ENCODE measurements at regions of chr6 and their contacts with region 1.

Region 1: GRCh38 chr6:83067448-83068413 is at the start of gene DOP1A:
- DNase-seq: peak; percentile 92
- ATAC-seq: peak; percentile 80
- H3K4me3 Mint-ChIP-seq: peak within 1 kb of the TSS; percentile 92
- H3K27ac Mint-ChIP-seq: peak within 1 kb of the TSS; percentile 92
- H3K4me1 Mint-ChIP-seq: peaks cover 56% of the 10 kb centered on the region
- H3K27me3 Mint-ChIP-seq: no peaks in the 10 kb centered on the region
- CTCF ChIP-seq: peak; percentile 85
- total RNA-seq, gene DOP1A: 24.2 and 30.8 TPM in 2 replicates

Region 2: DNA sequence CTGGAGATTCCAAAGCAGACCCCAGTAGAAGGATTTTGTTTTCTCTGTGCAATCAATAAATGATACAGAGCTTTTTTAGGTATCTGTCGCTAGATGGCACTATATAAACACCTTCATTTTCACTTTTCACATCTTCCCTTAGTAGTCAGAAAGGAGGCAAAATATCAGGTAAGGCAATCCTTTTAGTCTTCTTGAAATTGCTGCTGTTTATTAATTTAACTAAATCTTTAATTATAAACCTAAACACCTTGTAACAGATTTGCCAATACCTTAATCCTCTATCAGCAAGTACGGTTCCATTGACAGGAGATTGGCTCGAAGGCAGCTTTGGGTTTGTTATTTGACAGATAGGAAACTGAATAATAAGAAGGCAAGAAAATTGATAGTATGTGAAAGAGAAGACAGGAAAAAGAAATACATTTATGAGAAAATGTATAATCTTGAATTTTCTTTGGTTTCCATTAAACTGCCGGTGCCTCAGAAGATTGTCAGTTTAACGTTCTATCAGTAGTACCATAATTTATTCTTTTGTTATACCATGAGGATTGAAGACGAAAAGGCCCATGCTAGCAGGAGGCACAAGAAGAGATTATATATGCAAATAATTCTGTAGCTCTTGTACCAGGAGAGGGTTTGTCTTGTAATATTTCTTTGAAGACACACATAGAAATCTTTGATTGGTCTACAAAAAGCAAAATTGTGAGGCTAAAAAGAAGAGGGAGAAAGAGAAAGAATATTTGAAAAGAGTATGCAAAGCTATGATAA is 796.7 kb before region 1 on chr6:
- CTCF ChIA-PET with region 1: interaction called, 30 read pairs
- POLR2A ChIA-PET with region 1: no interaction called
- intact Hi-C with region 1: no loop called
- DNase-seq: no peak
- ATAC-seq: no peak
- H3K4me3 Mint-ChIP-seq: no peak overlapping the region
- H3K27ac Mint-ChIP-seq: no peak overlapping the region
- H3K4me1 Mint-ChIP-seq: no peaks in the 10 kb centered on the region
- H3K27me3 Mint-ChIP-seq: no peaks in the 10 kb centered on the region
- CTCF ChIP-seq: no peak

Region 3: DNA sequence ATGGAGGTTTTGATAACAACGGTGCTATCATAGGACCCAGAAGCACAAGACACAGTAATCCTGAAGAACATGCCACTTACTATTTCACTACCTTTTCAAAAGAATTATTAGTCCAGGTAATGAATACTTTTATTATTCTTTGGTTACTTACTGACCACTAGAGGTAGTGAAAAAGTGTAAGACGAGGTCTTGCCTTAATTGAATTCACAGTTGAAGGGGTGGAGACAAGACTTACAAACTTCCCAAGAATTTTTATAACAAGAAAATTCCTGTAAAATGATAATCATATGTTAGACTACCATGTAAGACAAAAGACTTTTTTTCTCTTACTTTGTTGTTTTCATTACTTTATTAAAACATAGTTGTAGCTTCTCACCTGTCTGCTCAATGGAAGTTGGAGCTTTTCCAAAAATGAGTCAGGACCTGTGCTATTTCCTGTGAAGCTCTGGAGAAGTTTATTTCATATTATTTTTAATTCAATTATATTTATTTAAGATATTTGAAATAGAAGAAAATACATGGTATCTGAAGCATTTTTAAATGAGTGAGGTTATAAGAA is 52.1 kb after region 1 on chr6:
- CTCF ChIA-PET with region 1: interaction called, 12 read pairs
- POLR2A ChIA-PET with region 1: no interaction called
- intact Hi-C with region 1: loop called (anchors 2 kb)
- DNase-seq: no peak
- ATAC-seq: no peak
- H3K4me3 Mint-ChIP-seq: no peak overlapping the region
- H3K27ac Mint-ChIP-seq: no peak overlapping the region
- H3K4me1 Mint-ChIP-seq: no peaks in the 10 kb centered on the region
- H3K27me3 Mint-ChIP-seq: no peaks in the 10 kb centered on the region
- CTCF ChIP-seq: no peak

Region 4: GRCh38 chr6:83192871-83193746 is 125.4 kb after region 1 on chr6 and contains the starts of genes PGM3 and RWDD2A:
- CTCF ChIA-PET with region 1: interaction called, 9 read pairs
- POLR2A ChIA-PET with region 1: interaction called, 10 read pairs
- intact Hi-C with region 1: loop called (anchors 1 kb)
- DNase-seq: peak; percentile 91
- ATAC-seq: peak; percentile 97
- H3K4me3 Mint-ChIP-seq: peak within 1 kb of the TSS; percentile 96
- H3K27ac Mint-ChIP-seq: peak within 1 kb of the TSS; percentile 91
- H3K4me1 Mint-ChIP-seq: peaks cover 31% of the 10 kb centered on the region
- H3K27me3 Mint-ChIP-seq: no peaks in the 10 kb centered on the region
- CTCF ChIP-seq: no peak
- total RNA-seq, gene PGM3: 18.2 and 20.1 TPM in 2 replicates
- total RNA-seq, gene RWDD2A: 1.7 and 1.8 TPM in 2 replicates

Region 5: GRCh38 chr6:83221889-83222479 is 154.3 kb after region 1 on chr6:
- CTCF ChIA-PET with region 1: interaction called, 73 read pairs
- POLR2A ChIA-PET with region 1: no interaction called
- intact Hi-C with region 1: no loop called
- DNase-seq: no peak
- ATAC-seq: no peak
- H3K4me3 Mint-ChIP-seq: no peak overlapping the region
- H3K27ac Mint-ChIP-seq: no peak overlapping the region
- H3K4me1 Mint-ChIP-seq: no peaks in the 10 kb centered on the region
- H3K27me3 Mint-ChIP-seq: peaks cover 2% of the 10 kb centered on the region
- CTCF ChIP-seq: no peak

Region 6: GRCh38 chr6:83505356-83505755 is 437.6 kb after region 1 on chr6:
- CTCF ChIA-PET with region 1: no interaction called
- POLR2A ChIA-PET with region 1: no interaction called
- intact Hi-C with region 1: no loop called
- DNase-seq: no peak
- ATAC-seq: no peak
- H3K4me3 Mint-ChIP-seq: no peak overlapping the region
- H3K27ac Mint-ChIP-seq: no peak overlapping the region
- H3K4me1 Mint-ChIP-seq: no peaks in the 10 kb centered on the region
- H3K27me3 Mint-ChIP-seq: no peaks in the 10 kb centered on the region
- CTCF ChIP-seq: no peak

Region 7: DNA sequence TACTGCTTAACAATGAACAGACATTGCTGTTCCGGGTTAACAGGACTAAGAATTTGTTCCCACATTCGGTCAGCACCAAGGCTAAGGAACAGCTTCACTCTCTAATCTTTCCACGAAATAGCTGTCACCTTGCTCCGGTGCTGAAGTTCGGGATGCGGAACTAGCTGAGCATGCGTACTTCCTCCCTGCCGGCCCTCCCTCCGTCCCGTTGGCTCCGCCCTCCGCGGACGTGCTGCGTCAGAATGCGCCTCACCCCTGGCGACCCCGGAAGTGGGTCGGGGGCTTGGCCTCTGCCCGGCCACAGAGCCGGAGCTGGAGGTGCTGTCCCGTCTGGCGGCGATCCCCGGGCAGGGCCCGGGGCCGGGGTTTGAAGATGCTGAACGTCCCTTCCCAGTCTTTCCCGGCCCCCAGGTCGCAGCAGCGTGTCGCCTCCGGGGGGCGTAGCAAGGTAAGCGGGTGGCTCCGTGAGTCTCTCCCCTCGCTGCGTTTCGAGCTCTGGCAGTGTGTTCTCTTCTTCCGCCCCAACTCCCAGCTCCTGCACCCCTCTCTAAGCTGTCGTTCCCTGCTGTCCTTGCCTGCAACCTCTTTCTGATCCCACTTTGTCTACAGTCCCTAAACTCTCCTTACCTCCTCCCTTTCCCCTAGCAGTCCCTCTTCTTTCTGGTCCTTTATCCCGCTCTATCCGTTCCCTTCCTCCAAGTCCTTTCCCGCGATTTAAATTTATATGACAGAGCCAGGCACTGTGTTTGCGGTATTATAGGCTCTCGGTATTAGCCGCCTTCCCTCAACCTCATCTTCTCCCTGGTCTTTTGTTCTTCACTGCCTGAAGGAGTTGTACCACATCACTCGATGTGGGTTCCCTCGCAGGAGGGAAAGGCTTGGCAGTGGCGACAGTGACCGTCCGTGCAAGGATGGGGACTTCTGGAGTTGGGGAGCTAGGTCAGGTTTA is 792.0 kb after region 1 on chr6 and contains the start of gene CYB5R4:
- CTCF ChIA-PET with region 1: no interaction called
- POLR2A ChIA-PET with region 1: interaction called, 4 read pairs
- intact Hi-C with region 1: loop called (anchors 1 kb)
- DNase-seq: peak; percentile 93
- ATAC-seq: peak; percentile 97
- H3K4me3 Mint-ChIP-seq: peak within 1 kb of the TSS; percentile 98
- H3K27ac Mint-ChIP-seq: peak within 1 kb of the TSS; percentile 86
- H3K4me1 Mint-ChIP-seq: peaks cover 50% of the 10 kb centered on the region
- H3K27me3 Mint-ChIP-seq: peaks cover 13% of the 10 kb centered on the region
- CTCF ChIP-seq: no peak
- total RNA-seq, gene CYB5R4: 35.7 and 37.3 TPM in 2 replicates

Region 8: DNA sequence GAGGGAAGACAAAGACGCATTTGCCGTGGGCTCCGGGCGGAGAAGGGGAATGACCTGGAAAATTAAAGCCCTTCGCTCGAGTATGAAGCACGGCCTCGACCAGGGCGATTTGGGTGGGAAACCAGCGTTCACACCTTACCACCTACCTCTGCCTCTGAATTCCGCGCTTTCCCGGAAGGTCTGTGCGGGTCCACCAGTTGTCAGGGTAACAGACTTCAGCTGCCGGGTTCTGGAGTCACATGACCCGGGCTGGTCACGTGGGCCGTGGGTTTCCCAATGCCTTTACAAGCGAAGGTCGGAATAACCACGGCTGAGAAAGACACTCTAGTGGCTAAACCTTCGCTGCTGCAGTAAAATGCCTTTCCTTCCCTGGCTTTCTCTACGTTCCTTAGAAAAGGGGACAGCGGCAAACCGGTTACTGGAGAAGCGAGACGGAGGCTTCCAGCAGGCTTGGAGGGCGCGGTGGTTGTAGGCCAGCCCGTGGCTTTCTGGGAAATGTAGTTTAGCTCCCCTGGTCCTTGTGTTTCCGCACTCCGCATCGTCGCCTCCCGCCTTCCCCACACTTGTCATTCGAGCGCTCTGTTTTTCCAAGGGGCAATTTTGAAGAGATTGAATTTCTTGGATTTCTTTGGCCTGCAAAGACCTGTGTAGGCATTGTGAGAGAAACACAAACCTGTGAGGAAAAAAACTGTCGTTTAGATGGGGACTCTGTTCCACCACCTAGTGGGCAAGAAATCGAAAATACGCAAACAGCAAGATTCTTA is 1159.9 kb after region 1 on chr6 and contains the start of gene CEP162:
- CTCF ChIA-PET with region 1: interaction called, 4 read pairs
- POLR2A ChIA-PET with region 1: no interaction called
- intact Hi-C with region 1: loop called (anchors 1 kb)
- DNase-seq: peak; percentile 82
- ATAC-seq: peak; percentile 92
- H3K4me3 Mint-ChIP-seq: peak within 1 kb of the TSS; percentile 99
- H3K27ac Mint-ChIP-seq: peak within 1 kb of the TSS; percentile 95
- H3K4me1 Mint-ChIP-seq: peaks cover 19% of the 10 kb centered on the region
- H3K27me3 Mint-ChIP-seq: peaks cover 13% of the 10 kb centered on the region
- CTCF ChIP-seq: no peak
- total RNA-seq, gene CEP162: 7.9 and 13.8 TPM in 2 replicates

Measured in activated B cell treated with CpG ODN at 0.5 μM for 24 hours (primary cell).